GM12878 (cell line): ENCODE measurements at regions of chr18 and their contacts with region 1.

Region 1: DNA sequence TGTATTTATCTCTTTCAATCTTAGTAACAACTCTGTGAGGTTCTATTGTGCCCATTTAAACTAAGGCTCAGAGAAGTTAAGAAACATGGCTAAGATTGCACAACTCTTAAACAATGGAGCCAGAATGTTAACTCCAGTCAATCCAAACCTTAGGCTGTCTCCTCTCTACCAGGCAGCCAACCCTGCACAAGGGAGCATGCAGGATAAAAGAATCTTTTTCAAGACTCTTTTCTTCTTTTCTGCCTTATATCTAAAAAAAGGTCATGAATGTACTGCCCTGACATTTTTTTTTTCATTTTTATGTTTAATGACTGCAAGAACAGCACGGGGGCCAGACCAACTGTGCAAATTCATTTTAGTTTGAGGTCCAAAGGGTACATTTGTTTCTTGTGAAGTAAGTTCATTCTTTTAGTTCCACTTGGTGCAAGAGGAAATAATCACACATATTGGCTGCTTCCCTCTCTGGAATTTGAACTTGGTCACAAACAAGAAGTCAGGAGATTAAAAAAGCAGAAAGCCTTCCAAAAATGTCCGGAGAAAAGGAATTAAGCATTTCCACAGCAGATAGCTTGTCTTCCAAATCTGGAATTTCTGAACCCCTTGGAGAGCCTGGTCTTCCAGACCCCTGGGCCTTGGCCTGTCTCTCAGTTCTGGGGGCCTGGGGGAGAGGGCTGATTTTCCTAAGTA is 96.0 kb upstream of the RIOK3 start:
- DNase-seq: no peak
- ATAC-seq: no peak
- H3K4me3 ChIP-seq: no peak overlapping the region
- H3K27ac ChIP-seq: no peak overlapping the region
- H3K4me1 ChIP-seq: peaks cover 21% of the 10 kb centered on the region
- H3K27me3 ChIP-seq: no peaks in the 10 kb centered on the region
- CTCF ChIP-seq: no peak
- EP300 ChIP-seq: no peak
- POLR2A ChIP-seq: no peak
- RAD21 ChIP-seq: no peak

Region 2: DNA sequence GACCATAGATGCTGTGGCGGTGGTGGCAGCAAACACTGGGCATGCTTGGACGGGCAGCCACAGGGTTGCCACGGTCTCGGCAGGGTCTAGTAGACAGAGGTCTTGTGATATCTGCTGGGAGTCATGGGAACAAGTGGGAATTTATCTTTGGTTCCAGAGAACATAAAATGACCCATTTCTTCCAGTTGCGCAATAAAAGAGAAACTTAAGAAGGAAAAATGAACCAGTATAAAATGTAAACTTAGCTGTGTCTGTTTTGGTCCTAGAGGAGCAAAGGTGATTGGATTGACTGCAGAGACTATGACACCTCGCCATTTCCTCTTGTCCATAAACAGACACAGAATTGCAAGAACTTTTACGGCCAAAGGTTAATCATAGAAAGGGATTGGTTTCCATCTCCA is 556.5 kb before region 1 on chr18:
- CTCF ChIA-PET with region 1: interaction called, 4 read pairs
- POLR2A ChIA-PET with region 1: no interaction called
- RAD21 ChIA-PET with region 1: interaction called, 5 read pairs
- SMC1A ChIA-PET with region 1: interaction called, 4 read pairs
- in situ Hi-C with region 1: no loop called
- intact Hi-C with region 1: loop called (anchors 5 kb)
- DNase-seq: no peak
- ATAC-seq: no peak
- H3K4me3 ChIP-seq: no peak overlapping the region
- H3K27ac ChIP-seq: no peak overlapping the region
- H3K4me1 ChIP-seq: no peaks in the 10 kb centered on the region; the same call in 1 of the 2 replicates
- H3K27me3 ChIP-seq: no peaks in the 10 kb centered on the region
- CTCF ChIP-seq: no peak
- EP300 ChIP-seq: no peak
- POLR2A ChIP-seq: no peak
- RAD21 ChIP-seq: no peak

Region 3: DNA sequence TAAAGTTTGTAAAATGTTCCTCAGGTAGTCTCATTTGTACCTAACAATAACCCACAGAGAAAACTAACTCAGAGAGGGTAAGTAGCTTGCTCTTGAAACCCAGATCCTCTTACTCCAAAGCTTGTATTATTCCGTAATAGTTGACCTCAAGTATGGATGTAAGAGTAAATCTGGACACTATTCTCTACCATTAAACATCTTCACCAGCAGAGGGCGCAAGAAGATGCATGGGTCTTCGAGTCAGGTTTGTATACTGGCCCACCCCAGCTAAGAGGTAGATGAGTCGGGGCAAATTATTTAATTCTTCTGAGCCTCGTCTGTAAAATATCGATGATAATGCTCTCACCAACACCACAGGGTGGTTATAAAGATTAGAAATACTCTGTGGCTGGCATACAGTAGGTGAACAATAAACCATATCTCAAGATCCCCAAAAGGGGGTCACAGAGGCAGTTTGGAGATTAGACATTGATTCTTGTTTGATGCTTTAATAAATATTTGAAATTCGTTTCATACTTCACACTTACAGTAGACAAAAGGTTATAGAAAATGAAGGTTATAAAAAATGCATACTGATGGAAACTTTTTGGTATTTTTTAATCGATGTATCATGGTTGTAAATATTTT is 225.3 kb before region 1 on chr18:
- CTCF ChIA-PET with region 1: interaction called, 141 read pairs
- POLR2A ChIA-PET with region 1: interaction called, 17 read pairs
- RAD21 ChIA-PET with region 1: interaction called, 105 read pairs
- SMC1A ChIA-PET with region 1: interaction called, 77 read pairs
- in situ Hi-C with region 1: loop called (anchors 5 kb)
- intact Hi-C with region 1: loop called (anchors 1 kb)
- DNase-seq: peak; percentile 58
- ATAC-seq: peak; percentile 44
- H3K4me3 ChIP-seq: no peak overlapping the region
- H3K27ac ChIP-seq: no peak overlapping the region
- H3K4me1 ChIP-seq: peaks cover 18% of the 10 kb centered on the region
- H3K27me3 ChIP-seq: no peaks in the 10 kb centered on the region
- CTCF ChIP-seq: peak; percentile 64 to 82 (median 67)
- EP300 ChIP-seq: no peak
- POLR2A ChIP-seq: no peak
- RAD21 ChIP-seq: peak; percentile 89

Region 4: GRCh38 chr18:23231340-23232021 is 125.6 kb before region 1 on chr18:
- CTCF ChIA-PET with region 1: interaction called, 8 read pairs
- POLR2A ChIA-PET with region 1: interaction called, 7 read pairs
- RAD21 ChIA-PET with region 1: interaction called, 18 read pairs
- SMC1A ChIA-PET with region 1: interaction called, 78 read pairs
- in situ Hi-C with region 1: loop called (anchors 5 kb)
- intact Hi-C with region 1: loop called (anchors 1 kb)
- DNase-seq: peak; percentile 99
- ATAC-seq: peak; percentile 81
- H3K4me3 ChIP-seq: no peak overlapping the region
- H3K27ac ChIP-seq: peak overlapping the region; percentile 95
- H3K4me1 ChIP-seq: peaks cover 55% of the 10 kb centered on the region
- H3K27me3 ChIP-seq: no peaks in the 10 kb centered on the region
- CTCF ChIP-seq: no peak
- EP300 ChIP-seq: peak; percentile 100
- POLR2A ChIP-seq: peak; percentile 51
- RAD21 ChIP-seq: no peak; the same call in 1 of the 2 replicates

Region 5: GRCh38 chr18:23243178-23243577 is 113.9 kb before region 1 on chr18:
- CTCF ChIA-PET with region 1: interaction called, 7 read pairs
- POLR2A ChIA-PET with region 1: interaction called, 9 read pairs
- RAD21 ChIA-PET with region 1: interaction called, 8 read pairs
- SMC1A ChIA-PET with region 1: interaction called, 21 read pairs
- in situ Hi-C with region 1: loop called (anchors 5 kb)
- intact Hi-C with region 1: loop called (anchors 1 kb)
- DNase-seq: no peak
- ATAC-seq: no peak
- H3K4me3 ChIP-seq: no peak overlapping the region
- H3K27ac ChIP-seq: peak overlapping the region; percentile 30; the same call in 1 of the 2 replicates
- H3K4me1 ChIP-seq: peaks cover 38% of the 10 kb centered on the region
- H3K27me3 ChIP-seq: no peaks in the 10 kb centered on the region
- CTCF ChIP-seq: no peak; a peak in 1 of 6 replicates
- EP300 ChIP-seq: no peak
- POLR2A ChIP-seq: no peak
- RAD21 ChIP-seq: no peak

Region 6: DNA sequence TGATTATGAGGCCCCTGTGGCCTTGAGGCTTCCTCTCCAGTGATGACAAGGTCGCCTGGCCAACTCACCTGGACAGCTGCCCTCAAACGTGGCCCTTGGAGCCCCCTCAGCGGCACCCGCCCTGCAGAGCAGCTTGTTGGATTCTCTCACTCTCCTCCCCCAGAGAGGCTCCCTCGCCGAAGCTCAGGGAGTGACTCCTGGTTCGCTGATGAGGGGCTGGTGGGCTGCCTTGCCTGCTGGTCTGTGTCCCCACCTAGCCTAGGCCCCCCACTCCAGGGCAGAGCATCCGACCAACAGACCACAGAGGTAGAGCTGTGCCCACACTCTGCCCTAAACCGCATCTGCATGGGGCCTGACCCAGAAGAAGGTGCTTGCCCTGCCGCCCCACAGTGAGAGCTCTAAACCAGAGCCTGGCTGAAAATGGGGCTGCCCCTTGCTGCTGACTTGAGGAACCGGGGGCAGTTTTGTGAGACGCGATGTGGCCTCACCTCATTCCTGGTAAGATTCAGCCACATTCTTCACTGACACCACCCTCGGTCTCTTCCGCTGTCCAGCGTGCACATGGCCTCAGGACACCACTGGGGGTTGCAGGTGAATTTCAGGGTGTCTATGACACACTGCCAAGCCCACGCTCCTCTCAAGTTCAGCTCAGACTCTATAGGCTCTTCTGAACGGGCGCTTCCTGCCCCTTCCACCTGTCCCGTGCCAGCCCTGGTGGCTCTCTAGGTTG is 90.2 kb before region 1 on chr18:
- CTCF ChIA-PET with region 1: interaction called, 3 read pairs
- POLR2A ChIA-PET with region 1: interaction called, 5 read pairs
- RAD21 ChIA-PET with region 1: interaction called, 5 read pairs
- SMC1A ChIA-PET with region 1: interaction called, 10 read pairs
- in situ Hi-C with region 1: no loop called
- intact Hi-C with region 1: no loop called
- DNase-seq: no peak
- ATAC-seq: peak; percentile 83
- H3K4me3 ChIP-seq: no peak overlapping the region
- H3K27ac ChIP-seq: peak overlapping the region; percentile 37; the same call in 1 of the 2 replicates
- H3K4me1 ChIP-seq: peaks cover 14% of the 10 kb centered on the region
- H3K27me3 ChIP-seq: no peaks in the 10 kb centered on the region
- CTCF ChIP-seq: no peak
- EP300 ChIP-seq: peak in 1 of 2 experiments; percentile 11; a peak in 2 of 4 replicates
- POLR2A ChIP-seq: no peak
- RAD21 ChIP-seq: no peak